ENCODE measurements at regions of chr12 and their contacts with region 1.

Region 1: GRCh38 chr12:65306366-65307168 is 28.1 kb downstream of the MSRB3 start:
- DNase-seq: peak; percentile 73
- H3K4me3 Mint-ChIP-seq: peak overlapping the region; percentile 29
- H3K27ac Mint-ChIP-seq: peak overlapping the region; percentile 59
- H3K4me1 Mint-ChIP-seq: peaks cover 26% of the 10 kb centered on the region
- H3K27me3 Mint-ChIP-seq: no peaks in the 10 kb centered on the region
- CTCF ChIP-seq: peak; percentile 75

Region 2: GRCh38 chr12:65881965-65882413 is 575.4 kb after region 1 on chr12:
- CTCF ChIA-PET with region 1: interaction called, 8 read pairs
- POLR2A ChIA-PET with region 1: no interaction called
- intact Hi-C with region 1: loop called (anchors 2 kb)
- DNase-seq: no peak
- H3K4me3 Mint-ChIP-seq: no peak overlapping the region
- H3K27ac Mint-ChIP-seq: peak overlapping the region; percentile 80
- H3K4me1 Mint-ChIP-seq: peaks cover 55% of the 10 kb centered on the region
- H3K27me3 Mint-ChIP-seq: no peaks in the 10 kb centered on the region
- CTCF ChIP-seq: no peak

Region 3: GRCh38 chr12:66035288-66035966 is 728.9 kb after region 1 on chr12:
- CTCF ChIA-PET with region 1: no interaction called
- POLR2A ChIA-PET with region 1: no interaction called
- intact Hi-C with region 1: loop called (anchors 2 kb)
- DNase-seq: peak; percentile 68
- H3K4me3 Mint-ChIP-seq: no peak overlapping the region
- H3K27ac Mint-ChIP-seq: no peak overlapping the region
- H3K4me1 Mint-ChIP-seq: peaks cover 23% of the 10 kb centered on the region
- H3K27me3 Mint-ChIP-seq: no peaks in the 10 kb centered on the region
- CTCF ChIP-seq: peak; percentile 51

Region 4: DNA sequence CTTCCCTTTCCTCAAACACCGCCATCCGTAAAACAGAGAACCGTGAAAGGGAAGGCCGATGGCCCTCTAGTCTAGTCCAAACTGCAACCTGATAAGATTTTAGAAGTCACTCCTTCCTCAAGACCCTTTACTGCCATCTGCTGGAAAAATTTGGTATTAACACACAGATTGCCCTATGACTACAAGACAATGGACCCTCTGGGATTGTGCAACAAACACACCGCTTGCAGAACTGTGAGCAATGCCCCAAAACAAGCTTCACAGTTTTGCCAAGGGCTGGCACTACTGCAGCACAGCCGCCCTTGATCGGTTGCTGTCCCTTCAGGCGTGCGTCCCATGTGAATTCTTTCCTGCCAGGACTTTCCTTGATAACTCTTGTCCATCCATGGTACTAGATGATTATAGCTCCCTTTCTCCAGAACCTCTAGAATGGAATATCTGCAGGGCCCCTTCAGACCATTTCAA is 800.9 kb after region 1 on chr12:
- CTCF ChIA-PET with region 1: interaction called, 11 read pairs
- POLR2A ChIA-PET with region 1: no interaction called
- intact Hi-C with region 1: loop called (anchors 1 kb)
- DNase-seq: peak; percentile 98
- H3K4me3 Mint-ChIP-seq: no peak overlapping the region
- H3K27ac Mint-ChIP-seq: no peak overlapping the region
- H3K4me1 Mint-ChIP-seq: peaks cover 16% of the 10 kb centered on the region
- H3K27me3 Mint-ChIP-seq: no peaks in the 10 kb centered on the region
- CTCF ChIP-seq: peak; percentile 62